Activated CD4-positive, alpha-beta memory T cell treated with anti-CD3 and anti-CD28 coated beads, Interleukin-2, amount 10 ng/mL, durations not matched to agents 7 days and 5 days (primary cell): ENCODE measurements at regions of chr12 and their contacts with region 1.

Region 1: GRCh38 chr12:4526923-4527546 is 11.7 kb upstream of the RAD51AP1 start:
- DNase-seq: no peak
- H3K4me3 Mint-ChIP-seq: no peak overlapping the region
- H3K27ac Mint-ChIP-seq: no peak overlapping the region
- H3K4me1 Mint-ChIP-seq: peaks cover 1% of the 10 kb centered on the region
- H3K27me3 Mint-ChIP-seq: no peaks in the 10 kb centered on the region

Region 2: DNA sequence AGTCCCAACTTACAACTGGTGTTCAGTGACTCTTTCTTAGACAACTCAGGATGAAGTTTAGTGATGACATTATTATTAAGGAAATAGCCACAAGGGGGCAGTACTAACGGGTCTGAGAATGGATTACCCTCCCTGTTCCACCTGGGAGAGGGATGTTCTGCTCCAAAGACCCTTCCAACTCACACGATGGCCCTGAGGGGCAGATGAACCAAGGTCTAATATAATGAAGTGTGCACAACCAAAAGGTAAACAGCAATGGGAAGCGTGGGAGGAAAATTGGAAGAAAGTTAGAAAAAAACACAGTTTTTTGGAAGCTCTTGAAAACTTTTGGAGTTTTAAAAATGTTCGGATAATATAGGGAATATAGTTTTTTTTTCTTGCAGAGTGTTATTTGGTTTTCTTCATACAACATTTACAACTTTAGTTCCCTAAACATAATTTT is 105.4 kb before region 1 on chr12:
- CTCF ChIA-PET with region 1: interaction called, 44 read pairs
- POLR2A ChIA-PET with region 1: no interaction called
- DNase-seq: no peak
- H3K4me3 Mint-ChIP-seq: no peak overlapping the region
- H3K27ac Mint-ChIP-seq: no peak overlapping the region
- H3K4me1 Mint-ChIP-seq: no peaks in the 10 kb centered on the region
- H3K27me3 Mint-ChIP-seq: peaks cover 17% of the 10 kb centered on the region